Endothelial cell of umbilical vein (primary cell): ENCODE measurements at regions of chr5 and their contacts with region 1.

Region 1: DNA sequence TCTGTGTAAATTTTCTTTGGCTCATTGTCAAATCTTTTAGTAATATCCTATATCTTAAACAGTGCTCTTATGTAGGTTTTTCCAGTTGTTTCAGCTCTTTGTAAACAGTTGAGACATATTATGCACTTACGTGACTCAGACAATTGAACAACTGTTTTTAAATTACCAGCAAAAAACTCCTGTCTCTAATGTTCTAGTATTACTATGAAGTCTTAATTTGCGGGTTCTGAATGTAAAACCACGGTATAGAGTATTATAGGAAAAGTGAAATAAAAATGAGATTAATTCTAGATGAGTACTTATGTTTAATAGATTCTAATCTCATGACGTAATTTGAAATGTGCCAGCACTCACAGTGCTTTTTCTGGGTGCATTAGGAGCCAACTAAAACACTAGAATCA is 136.0 kb downstream of the GDNF start:
- DNase-seq: peak; percentile 91
- H3K4me3 ChIP-seq: peak overlapping the region in 1 of 3 experiments; percentile 33
- H3K27ac ChIP-seq: peak overlapping the region; percentile 75
- H3K4me1 ChIP-seq: peaks cover 18% of the 10 kb centered on the region
- H3K27me3 ChIP-seq: no peaks in the 10 kb centered on the region
- CTCF ChIP-seq: no peak
- POLR2A ChIP-seq: no peak

Region 2: DNA sequence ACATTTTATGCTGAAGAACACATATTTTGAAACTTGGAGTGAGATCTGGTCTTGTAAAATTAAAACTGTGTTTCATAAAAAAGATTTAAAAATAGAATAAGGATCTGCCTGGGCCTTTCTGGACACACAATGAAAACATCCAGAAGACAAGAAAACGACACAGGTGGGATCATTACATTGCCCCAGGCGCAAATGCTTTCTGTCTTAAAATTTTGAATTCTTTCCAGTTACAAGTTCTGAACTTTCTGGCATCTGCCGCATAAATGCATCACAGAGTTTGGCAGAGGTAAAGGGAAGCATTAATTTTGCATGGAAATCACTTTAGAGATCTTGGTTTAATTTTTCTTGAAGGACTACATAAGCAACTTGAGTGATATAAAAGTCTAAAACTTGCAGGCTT is 105.1 kb before region 1 on chr5:
- CTCF ChIA-PET with region 1: no interaction called
- POLR2A ChIA-PET with region 1: no interaction called
- dilution Hi-C with region 1: no loop called
- intact Hi-C with region 1: no loop called
- DNase-seq: no peak
- H3K4me3 ChIP-seq: no peak overlapping the region
- H3K27ac ChIP-seq: no peak overlapping the region
- H3K4me1 ChIP-seq: no peaks in the 10 kb centered on the region
- H3K27me3 ChIP-seq: no peaks in the 10 kb centered on the region
- CTCF ChIP-seq: no peak
- POLR2A ChIP-seq: no peak

Region 3: DNA sequence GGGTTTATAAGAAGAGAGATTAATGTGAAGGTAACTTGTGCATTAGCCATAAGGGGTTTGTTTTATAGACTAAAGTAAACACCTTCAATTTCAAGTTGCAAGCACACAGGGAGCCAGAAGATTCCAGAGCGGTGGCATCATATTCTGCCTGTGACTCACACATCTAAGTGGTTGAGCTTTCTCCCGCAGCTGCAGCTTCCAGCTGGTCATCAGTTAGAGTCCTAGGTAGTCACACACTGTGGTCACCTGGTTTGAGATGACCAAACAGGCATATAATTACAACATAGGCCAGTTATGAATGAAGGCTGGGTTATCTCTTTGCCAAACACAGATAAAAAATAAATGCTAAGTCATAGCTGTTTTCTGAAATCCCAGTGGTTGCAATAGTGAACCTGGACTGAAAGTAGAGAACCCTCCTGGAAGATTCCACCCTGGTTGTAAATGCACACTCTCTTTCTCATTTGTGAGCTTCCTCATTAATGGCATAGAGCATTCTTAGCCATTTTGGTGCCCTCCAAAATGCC is 35.3 kb before region 1 on chr5:
- CTCF ChIA-PET with region 1: interaction called, 3 read pairs
- POLR2A ChIA-PET with region 1: no interaction called
- dilution Hi-C with region 1: no loop called
- intact Hi-C with region 1: loop called (anchors 5 kb)
- DNase-seq: peak; percentile 88
- H3K4me3 ChIP-seq: no peak overlapping the region
- H3K27ac ChIP-seq: peak overlapping the region; percentile 41
- H3K4me1 ChIP-seq: peaks cover 19% of the 10 kb centered on the region
- H3K27me3 ChIP-seq: no peaks in the 10 kb centered on the region
- CTCF ChIP-seq: no peak
- POLR2A ChIP-seq: no peak

Region 4: GRCh38 chr5:37738057-37738691 is 34.3 kb after region 1 on chr5:
- CTCF ChIA-PET with region 1: interaction called, 9 read pairs
- POLR2A ChIA-PET with region 1: no interaction called
- dilution Hi-C with region 1: no loop called
- intact Hi-C with region 1: loop called (anchors 1 kb)
- DNase-seq: peak; percentile 95
- H3K4me3 ChIP-seq: no peak overlapping the region
- H3K27ac ChIP-seq: peak overlapping the region; percentile 42
- H3K4me1 ChIP-seq: peaks cover 19% of the 10 kb centered on the region
- H3K27me3 ChIP-seq: no peaks in the 10 kb centered on the region
- CTCF ChIP-seq: no peak
- POLR2A ChIP-seq: no peak

Region 5: DNA sequence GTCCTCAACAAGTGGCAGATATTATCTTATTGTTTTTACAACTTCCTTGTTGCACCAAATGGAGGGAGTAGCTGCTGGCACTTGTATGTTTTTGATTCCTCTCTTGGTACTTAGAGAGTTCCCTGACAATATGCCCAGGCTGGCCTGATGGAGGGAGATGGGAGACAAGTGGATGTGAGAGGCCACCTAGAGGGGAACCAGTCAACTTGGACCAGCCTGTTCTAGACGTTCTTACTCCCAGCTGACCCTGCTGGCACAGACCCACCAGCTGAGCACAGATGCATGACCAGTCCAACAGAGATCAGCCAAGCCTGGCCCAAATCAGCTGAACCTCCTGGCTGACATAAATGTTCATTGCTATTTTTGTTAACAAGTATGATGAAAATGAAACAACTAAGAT is 196.9 kb after region 1 on chr5:
- CTCF ChIA-PET with region 1: no interaction called
- POLR2A ChIA-PET with region 1: no interaction called
- dilution Hi-C with region 1: no loop called
- intact Hi-C with region 1: no loop called
- DNase-seq: peak; percentile 13
- H3K4me3 ChIP-seq: no peak overlapping the region
- H3K27ac ChIP-seq: no peak overlapping the region
- H3K4me1 ChIP-seq: no peaks in the 10 kb centered on the region
- H3K27me3 ChIP-seq: no peaks in the 10 kb centered on the region
- CTCF ChIP-seq: peak in 1 of 2 donors; percentile 5
- POLR2A ChIP-seq: no peak

Region 6: GRCh38 chr5:38138574-38138973 is 434.7 kb after region 1 on chr5:
- CTCF ChIA-PET with region 1: no interaction called
- POLR2A ChIA-PET with region 1: no interaction called
- dilution Hi-C with region 1: no loop called
- intact Hi-C with region 1: no loop called
- DNase-seq: no peak
- H3K4me3 ChIP-seq: no peak overlapping the region
- H3K27ac ChIP-seq: no peak overlapping the region
- H3K4me1 ChIP-seq: no peaks in the 10 kb centered on the region
- H3K27me3 ChIP-seq: no peaks in the 10 kb centered on the region
- CTCF ChIP-seq: no peak
- POLR2A ChIP-seq: no peak